ENCODE measurements at regions of chr9 and their contacts with region 1.

Region 1: GRCh38 chr9:136482793-136483588 is at the start of gene SEC16A:
- DNase-seq: peak; percentile 98 to 100 (median 99)
- H3K4me3 ChIP-seq: peak within 1 kb of the TSS; percentile 75
- H3K4me3 Mint-ChIP-seq: peak within 1 kb of the TSS; percentile 92 to 97 (median 94)
- H3K27ac ChIP-seq: peak within 1 kb of the TSS; percentile 96
- H3K27ac Mint-ChIP-seq: peak within 1 kb of the TSS; percentile 93 to 100 (median 98)
- H3K4me1 ChIP-seq: peaks cover 19% of the 10 kb centered on the region
- H3K4me1 Mint-ChIP-seq: peaks cover 29 to 45% (median 30%) of the 10 kb centered on the region in 3 donors
- H3K27me3 ChIP-seq: no peaks in the 10 kb centered on the region
- H3K27me3 Mint-ChIP-seq: no peaks in the 10 kb centered on the region
- total RNA-seq, gene SEC16A: 75.5 to 78.0 TPM

Region 2: GRCh38 chr9:136429683-136430590 is 53.1 kb before region 1 on chr9:
- CTCF ChIA-PET with region 1: no interaction called
- POLR2A ChIA-PET with region 1: no interaction called
- DNase-seq: no peak
- H3K4me3 ChIP-seq: no peak overlapping the region
- H3K4me3 Mint-ChIP-seq: no peak overlapping the region
- H3K27ac ChIP-seq: no peak overlapping the region
- H3K27ac Mint-ChIP-seq: no peak overlapping the region
- H3K4me1 ChIP-seq: no peaks in the 10 kb centered on the region
- H3K4me1 Mint-ChIP-seq: no peaks in the 10 kb centered on the region
- H3K27me3 ChIP-seq: no peaks in the 10 kb centered on the region
- H3K27me3 Mint-ChIP-seq: no peaks in the 10 kb centered on the region

Region 3: DNA sequence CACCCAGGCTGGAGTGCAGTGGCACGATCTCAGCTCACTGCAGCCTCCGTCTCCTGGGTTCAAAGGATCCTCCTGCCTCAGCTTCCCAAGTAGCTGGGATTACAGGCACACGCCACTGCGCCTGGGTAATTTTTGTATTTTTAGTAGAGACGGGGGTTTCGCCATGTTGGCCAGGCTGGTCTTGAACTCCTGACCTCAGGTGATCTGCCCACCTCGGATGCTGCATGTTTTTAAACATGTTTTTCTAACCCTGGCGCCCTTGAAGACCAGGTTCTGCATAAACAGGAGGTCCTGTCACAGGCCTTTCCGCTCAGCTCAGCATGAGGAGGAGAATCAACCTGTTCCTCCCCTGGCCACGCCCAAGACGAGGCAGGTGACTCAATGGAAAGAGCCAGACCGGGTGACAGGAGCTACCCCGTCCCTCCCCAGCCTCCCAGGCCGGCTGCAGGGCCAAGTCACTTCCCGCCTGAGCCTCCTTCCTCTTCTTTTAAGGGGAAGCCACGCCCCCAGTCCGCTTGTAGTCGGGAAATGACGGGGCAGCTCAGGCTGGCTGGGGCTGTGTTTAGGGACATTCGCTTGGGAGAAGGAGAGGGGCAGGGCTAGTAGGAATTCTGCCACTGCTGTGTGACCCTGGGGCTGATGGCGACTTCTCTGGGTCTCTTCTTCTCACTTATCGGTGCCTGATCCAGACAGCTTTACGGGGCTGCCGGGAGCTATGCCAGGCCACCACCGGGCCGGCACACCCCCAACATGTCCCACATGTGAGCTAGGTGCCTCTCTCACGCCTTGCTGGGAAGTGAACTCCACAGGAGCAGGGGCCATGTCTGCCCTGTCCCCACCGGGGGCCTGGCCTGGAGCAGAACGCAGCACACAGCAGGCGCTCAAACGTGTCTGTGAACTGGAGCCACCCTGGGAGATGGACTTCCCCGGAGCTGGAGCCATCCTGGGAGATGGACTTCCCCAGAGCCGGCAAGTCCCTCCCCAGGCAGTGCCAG is 56.7 kb after region 1 on chr9:
- CTCF ChIA-PET with region 1: interaction called, 29 read pairs
- POLR2A ChIA-PET with region 1: interaction called, 4 read pairs
- DNase-seq: peak; percentile 74 to 91 (median 81)
- H3K4me3 ChIP-seq: peak overlapping the region; percentile 78
- H3K4me3 Mint-ChIP-seq: peak overlapping the region; percentile 81 to 95 (median 85)
- H3K27ac ChIP-seq: peak overlapping the region; percentile 60
- H3K27ac Mint-ChIP-seq: peak overlapping the region; percentile 94 to 99 (median 98)
- H3K4me1 ChIP-seq: peaks cover 73% of the 10 kb centered on the region
- H3K4me1 Mint-ChIP-seq: peaks cover 40 to 78% (median 55%) of the 10 kb centered on the region in 3 donors
- H3K27me3 ChIP-seq: no peaks in the 10 kb centered on the region
- H3K27me3 Mint-ChIP-seq: no peaks in the 10 kb centered on the region

Region 4: DNA sequence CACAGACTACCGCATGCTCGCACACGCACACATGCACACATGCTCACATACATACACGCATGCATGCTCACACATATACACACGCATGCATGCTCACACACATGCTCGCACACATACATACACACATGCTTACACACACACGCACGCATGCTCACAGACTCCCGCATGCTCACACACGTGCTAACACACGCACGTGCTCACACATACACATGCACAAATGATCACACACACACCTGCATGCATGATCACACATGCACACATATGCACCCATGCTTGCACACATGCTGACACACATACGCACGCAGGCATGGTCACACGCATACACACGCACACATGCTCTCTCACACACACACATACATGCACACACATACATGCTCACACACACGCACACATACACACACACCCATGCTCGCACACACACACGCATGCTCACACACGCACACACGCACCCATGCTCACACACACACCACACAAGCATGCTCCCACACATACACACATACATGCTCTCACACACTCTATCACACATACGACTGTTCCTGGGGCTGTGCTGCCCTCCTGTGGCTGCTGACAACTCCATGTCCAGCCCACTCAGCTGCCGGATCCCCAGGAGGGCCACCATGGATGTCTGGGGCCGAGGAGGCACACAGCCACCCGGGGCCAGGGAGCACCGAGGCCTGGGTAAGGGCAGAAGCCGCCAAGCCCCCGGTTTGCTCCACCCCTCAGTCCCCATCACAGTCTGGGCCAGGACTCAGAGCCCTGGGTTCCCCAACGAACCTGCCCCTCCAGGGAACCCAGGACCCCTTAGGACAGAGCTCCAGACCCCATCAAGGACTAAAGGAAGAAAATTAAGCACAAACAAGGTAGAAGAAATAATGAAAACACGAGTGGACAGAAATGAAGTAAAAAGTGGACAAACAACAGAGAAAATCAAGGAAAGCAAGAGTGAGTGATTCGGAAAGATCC is 148.3 kb after region 1 on chr9:
- CTCF ChIA-PET with region 1: interaction called, 82 read pairs
- POLR2A ChIA-PET with region 1: interaction called, 6 read pairs
- DNase-seq: peak; percentile 61 to 87 (median 77)
- H3K4me3 ChIP-seq: no peak overlapping the region
- H3K4me3 Mint-ChIP-seq: no peak overlapping the region
- H3K27ac ChIP-seq: no peak overlapping the region
- H3K27ac Mint-ChIP-seq: no peak overlapping the region
- H3K4me1 ChIP-seq: peaks cover 6% of the 10 kb centered on the region
- H3K4me1 Mint-ChIP-seq: no peaks in the 10 kb centered on the region
- H3K27me3 ChIP-seq: no peaks in the 10 kb centered on the region
- H3K27me3 Mint-ChIP-seq: peaks cover 6 to 8% of the 10 kb centered on the region in 2 donors

Region 5: DNA sequence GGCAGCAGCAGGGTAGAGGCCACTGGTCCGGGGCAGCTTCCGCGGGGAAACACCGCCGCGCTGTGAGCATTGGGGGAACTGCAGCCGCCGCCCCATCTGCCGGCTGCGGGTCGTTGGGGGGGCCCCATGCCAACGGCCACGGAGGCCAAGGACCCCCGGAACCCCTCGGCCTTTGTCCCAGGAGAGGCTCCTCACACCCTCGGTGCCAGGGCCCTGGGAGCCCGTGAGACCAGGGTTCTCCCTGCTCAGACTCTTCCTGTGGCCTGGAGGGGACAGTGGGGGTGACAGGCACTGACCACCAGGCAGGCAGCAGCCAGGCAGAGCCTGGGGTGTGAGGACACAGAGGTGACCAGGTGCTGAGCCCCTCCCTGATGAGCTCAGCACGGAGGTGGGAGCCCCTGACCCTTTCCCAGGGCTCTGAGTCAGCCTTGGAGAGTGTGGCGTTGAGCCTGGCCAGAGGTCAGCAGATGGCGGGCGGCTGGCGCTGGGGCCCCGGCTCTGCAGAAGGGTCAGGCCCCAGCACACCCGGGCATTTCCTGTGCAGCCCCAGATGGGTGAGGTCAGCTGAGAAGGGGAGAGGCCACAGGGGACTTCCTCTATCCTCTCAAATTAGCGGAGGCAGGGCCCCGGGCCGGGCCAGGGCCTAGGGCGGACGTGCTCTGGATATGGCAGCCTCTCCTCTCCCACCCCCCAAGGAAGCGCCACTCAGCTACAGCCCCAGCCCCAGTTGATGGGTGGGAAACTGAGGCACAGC is 161.8 kb after region 1 on chr9:
- CTCF ChIA-PET with region 1: interaction called, 19 read pairs
- POLR2A ChIA-PET with region 1: interaction called, 5 read pairs
- DNase-seq: peak in 4 of 5 donors; percentile 58 to 60 (median 59)
- H3K4me3 ChIP-seq: no peak overlapping the region
- H3K4me3 Mint-ChIP-seq: no peak overlapping the region
- H3K27ac ChIP-seq: peak overlapping the region; percentile 75
- H3K27ac Mint-ChIP-seq: no peak overlapping the region
- H3K4me1 ChIP-seq: peaks cover 8% of the 10 kb centered on the region
- H3K4me1 Mint-ChIP-seq: no peaks in the 10 kb centered on the region
- H3K27me3 ChIP-seq: peaks cover 28% of the 10 kb centered on the region
- H3K27me3 Mint-ChIP-seq: peaks cover 27 to 28% of the 10 kb centered on the region in 2 donors